Dendritic cell treated with granulocyte-macrophage colony-stimulating factor and Interleukin-4, amounts not matched to agents 40 ng/mL and 50 ng/mL, for 4 days (primary cell): ENCODE measurements at regions of chr20 and their contacts with region 1.

Region 1: GRCh38 chr20:47379433-47380150 is 23.1 kb upstream of the ZMYND8 start:
- H3K4me3 Mint-ChIP-seq: no peak overlapping the region
- H3K27ac Mint-ChIP-seq: peak overlapping the region; percentile 2
- H3K4me1 Mint-ChIP-seq: peaks cover 18% of the 10 kb centered on the region
- H3K27me3 Mint-ChIP-seq: no peaks in the 10 kb centered on the region

Region 2: DNA sequence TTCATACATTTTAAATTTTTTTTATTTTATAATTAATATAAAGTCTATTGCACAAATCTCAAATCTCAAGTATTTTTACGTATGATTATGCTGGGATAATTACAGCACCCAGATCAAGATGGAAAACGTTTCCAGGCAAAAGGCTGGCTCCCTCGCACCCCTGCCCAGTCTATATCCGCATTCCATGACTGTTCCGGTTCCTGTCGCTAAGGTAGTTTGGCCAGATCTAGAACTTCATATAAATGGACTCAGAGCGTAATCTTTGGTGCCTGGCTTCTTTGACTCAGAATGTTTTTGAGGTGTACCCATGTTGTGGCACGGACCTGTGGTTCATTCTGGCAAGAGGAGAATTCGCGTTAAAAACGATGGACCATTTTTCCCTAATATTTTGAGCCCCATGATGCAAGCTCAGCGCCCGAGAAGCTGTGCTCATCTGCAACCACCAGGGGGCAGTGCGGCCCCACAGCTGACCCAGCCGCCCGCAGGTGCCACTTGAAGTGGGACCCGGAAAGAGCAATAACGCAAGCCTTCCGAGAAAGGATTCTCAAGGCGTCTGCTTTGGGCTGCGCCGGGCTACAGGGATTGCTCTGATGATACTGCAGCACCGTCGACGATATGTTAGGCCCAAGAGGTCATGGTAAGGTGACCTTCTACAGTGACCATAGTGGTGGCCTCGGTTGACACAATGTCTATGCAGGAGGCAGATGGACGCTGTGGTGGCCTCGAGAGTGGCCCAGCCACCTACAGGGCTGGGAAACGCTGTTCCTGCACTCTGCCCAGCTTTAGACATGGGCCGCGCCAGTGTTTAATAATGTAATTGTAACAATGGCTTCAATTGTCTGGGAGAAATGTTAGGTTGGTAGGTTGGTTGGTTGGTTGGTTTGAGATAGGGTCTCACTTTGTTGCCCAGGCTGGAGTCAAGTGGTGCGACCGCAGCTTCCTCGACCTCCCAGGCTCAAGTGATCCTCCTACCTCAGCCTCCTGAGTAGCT is 183.2 kb before region 1 on chr20:
- intact Hi-C with region 1: loop called (anchors 5 kb)
- H3K4me3 Mint-ChIP-seq: no peak overlapping the region
- H3K27ac Mint-ChIP-seq: no peak overlapping the region
- H3K4me1 Mint-ChIP-seq: no peaks in the 10 kb centered on the region
- H3K27me3 Mint-ChIP-seq: peaks cover 2% of the 10 kb centered on the region

Region 3: DNA sequence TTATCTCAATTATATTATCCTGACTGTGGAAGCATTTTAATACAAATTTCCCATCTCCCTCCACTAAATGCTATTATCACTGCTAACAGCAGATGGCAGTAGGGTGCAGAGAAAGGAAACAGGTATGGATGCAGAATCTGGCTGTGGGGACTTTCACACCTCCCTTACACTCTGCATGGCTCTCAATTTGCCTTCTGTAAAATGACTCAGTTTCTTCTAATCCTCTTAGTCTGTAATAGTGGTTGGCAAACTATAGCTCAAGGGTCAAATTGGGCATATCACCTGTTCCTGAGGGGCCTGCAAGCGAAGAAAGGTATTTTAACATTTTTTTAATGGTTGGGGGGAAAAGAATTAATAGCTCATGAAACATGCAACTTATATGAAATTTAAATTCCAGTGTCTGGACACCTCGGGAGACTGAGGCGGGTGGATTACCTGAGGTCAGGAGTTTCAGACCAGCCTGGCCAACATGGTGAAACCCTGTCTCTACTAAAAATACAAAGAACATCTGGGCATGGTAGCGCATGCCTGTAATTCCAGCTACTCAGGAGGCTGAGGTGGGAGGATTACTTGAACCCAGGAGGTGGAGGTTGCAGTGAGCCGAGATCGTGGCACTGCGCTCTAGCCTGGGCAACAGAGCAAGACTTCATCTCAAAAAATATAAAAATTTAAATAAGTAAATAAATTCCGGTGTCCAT is 106.5 kb before region 1 on chr20:
- intact Hi-C with region 1: loop called (anchors 1 kb)
- H3K4me3 Mint-ChIP-seq: no peak overlapping the region
- H3K27ac Mint-ChIP-seq: no peak overlapping the region
- H3K4me1 Mint-ChIP-seq: peaks cover 28% of the 10 kb centered on the region
- H3K27me3 Mint-ChIP-seq: no peaks in the 10 kb centered on the region

Region 4: DNA sequence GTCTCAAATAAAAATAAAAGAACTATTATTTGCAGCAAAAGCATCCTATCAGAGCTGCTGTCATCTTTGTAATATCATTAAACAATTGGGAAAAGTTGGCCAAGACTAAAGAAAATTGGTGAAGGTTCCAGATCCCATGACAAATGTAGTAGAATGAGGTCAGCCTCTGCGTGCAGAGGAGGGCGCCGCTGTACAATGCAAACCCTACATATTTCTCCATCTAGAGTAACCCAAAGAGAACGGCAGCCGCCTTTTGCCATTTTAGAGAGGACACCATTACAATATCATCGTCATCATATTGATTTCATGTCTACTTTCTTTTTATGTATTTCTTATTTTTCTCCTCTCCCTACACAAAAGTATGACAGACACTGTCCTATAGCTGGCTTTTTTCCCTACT is 82.6 kb before region 1 on chr20:
- intact Hi-C with region 1: loop called (anchors 5 kb)
- H3K4me3 Mint-ChIP-seq: no peak overlapping the region
- H3K27ac Mint-ChIP-seq: peak overlapping the region; percentile 51
- H3K4me1 Mint-ChIP-seq: peaks cover 15% of the 10 kb centered on the region
- H3K27me3 Mint-ChIP-seq: no peaks in the 10 kb centered on the region

Region 5: GRCh38 chr20:47352332-47353238 is 27.0 kb before region 1 on chr20:
- intact Hi-C with region 1: no loop called
- H3K4me3 Mint-ChIP-seq: peak overlapping the region; percentile 9
- H3K27ac Mint-ChIP-seq: no peak overlapping the region
- H3K4me1 Mint-ChIP-seq: peaks cover 52% of the 10 kb centered on the region
- H3K27me3 Mint-ChIP-seq: no peaks in the 10 kb centered on the region

Region 6: DNA sequence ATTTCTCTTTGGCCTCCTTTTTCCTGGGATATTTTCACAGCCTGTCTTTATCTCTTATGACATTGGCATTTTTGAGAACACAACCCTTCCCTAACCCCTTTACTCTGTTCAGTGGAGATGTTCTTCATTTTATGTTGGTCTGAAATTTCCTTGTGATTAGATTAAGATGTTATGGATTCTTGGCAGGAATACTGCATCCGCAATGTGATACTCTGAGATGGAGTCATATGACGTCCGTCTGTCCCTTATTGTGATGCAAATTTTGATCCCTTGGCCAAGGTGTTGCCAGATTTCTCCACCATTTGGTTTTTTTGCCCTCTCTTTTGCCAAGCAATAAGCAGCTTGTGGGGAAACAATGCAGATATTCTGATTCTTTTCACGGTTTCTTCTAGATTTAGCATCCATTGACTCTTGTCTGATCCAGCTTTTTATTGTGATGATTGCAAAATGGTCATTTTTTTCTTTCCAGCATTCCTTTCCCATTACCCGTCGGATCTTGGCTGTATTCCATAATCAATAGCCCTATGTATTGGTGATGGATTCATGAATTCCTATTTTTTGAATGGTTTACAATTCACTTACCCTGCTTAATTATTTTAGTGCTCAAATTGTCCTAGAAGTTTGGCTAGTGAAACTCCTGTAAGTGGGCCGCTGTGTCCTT is 207.2 kb after region 1 on chr20:
- intact Hi-C with region 1: no loop called
- H3K4me3 Mint-ChIP-seq: no peak overlapping the region
- H3K27ac Mint-ChIP-seq: no peak overlapping the region
- H3K4me1 Mint-ChIP-seq: peaks cover 29% of the 10 kb centered on the region
- H3K27me3 Mint-ChIP-seq: no peaks in the 10 kb centered on the region